Activated naive CD4-positive, alpha-beta T cell treated with anti-CD3 and anti-CD28 coated beads, Interleukin-2, amount 10 ng/mL, durations not matched to agents 7 days and 5 days (primary cell): ENCODE measurements at regions of chr22 and their contacts with region 1.

Region 1: DNA sequence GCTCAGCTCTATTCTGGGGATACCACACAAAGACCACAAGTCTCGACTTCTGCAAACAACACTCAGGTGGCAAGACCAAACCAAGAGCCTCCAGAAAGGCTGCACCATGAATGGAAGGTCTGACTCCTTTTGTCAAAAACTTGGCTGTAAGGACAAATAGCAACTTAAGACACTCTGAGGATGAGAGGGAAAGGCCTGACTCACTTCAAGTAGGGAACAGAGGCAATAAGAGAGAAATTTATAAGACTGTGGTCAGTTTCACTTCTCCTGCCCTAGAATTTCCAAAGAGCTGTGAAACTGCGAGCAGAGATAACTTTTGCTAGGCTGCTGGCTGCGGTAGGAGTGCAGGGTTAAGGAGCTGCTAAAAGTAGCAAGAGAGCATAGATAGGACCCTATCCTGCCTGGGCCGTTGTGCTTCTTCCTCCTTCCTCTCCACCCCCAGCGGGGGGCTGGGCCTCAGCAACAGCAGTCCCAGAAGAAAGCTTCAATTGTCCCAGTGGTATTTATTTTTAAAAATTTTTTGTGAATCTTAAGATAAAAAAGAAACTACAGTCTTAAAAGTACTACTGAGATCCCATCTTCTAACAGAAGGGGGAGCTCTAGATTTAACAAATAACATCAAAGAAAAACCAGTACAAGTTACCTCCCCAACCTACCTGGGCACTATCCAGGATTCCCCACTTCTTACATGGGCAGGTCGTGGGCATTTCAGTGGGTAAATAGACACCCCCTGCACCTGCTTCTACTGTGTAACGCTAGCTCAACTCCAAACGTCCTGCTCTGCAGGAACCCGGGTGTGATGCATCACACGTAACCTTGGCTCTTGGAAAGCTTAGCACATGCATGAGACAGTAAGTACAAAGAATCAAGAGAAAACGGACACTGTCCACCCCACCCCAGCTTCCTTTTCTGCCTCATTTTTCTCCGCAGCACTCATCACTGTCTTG is 66.4 kb downstream of the SGSM3 start:
- DNase-seq: no peak
- H3K4me3 Mint-ChIP-seq: no peak overlapping the region
- H3K27ac Mint-ChIP-seq: peak overlapping the region; percentile 73
- H3K4me1 Mint-ChIP-seq: peaks cover 39% of the 10 kb centered on the region
- H3K27me3 Mint-ChIP-seq: no peaks in the 10 kb centered on the region

Region 2: DNA sequence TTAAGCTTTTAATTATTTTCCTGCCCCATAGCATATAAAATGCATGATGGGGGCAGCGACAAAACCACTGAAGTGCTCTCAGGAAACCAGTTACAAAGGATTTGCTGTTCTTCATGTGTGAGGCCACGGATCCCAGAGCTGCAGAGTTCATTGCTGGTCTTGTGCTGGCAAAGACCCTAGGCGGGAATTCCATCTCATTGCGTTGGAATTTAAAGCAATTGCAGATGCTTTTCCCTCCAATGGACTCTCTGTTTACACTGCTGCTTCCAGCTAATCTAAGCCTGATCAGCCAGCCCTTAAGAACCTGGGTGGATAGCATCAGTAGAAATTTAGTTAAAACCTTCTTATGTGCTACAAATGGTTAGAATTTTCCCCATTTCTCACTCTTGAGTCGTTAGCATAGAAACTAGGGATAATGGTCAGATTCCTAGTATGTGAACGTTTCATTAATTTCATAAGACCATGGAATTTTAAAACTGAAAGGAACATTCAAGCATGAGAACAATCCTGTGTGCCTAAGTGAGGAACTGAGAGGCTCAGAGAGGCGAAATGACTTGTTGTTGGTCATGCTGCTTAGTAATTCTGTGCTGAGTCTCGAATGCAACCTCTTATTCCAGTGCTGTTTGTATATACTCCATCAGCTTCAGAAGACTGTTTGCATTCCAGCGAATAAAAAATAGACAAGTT is 126.6 kb before region 1 on chr22:
- CTCF ChIA-PET with region 1: no interaction called
- DNase-seq: no peak
- H3K4me3 Mint-ChIP-seq: no peak overlapping the region
- H3K27ac Mint-ChIP-seq: no peak overlapping the region
- H3K4me1 Mint-ChIP-seq: peaks cover 30% of the 10 kb centered on the region
- H3K27me3 Mint-ChIP-seq: no peaks in the 10 kb centered on the region

Region 3: DNA sequence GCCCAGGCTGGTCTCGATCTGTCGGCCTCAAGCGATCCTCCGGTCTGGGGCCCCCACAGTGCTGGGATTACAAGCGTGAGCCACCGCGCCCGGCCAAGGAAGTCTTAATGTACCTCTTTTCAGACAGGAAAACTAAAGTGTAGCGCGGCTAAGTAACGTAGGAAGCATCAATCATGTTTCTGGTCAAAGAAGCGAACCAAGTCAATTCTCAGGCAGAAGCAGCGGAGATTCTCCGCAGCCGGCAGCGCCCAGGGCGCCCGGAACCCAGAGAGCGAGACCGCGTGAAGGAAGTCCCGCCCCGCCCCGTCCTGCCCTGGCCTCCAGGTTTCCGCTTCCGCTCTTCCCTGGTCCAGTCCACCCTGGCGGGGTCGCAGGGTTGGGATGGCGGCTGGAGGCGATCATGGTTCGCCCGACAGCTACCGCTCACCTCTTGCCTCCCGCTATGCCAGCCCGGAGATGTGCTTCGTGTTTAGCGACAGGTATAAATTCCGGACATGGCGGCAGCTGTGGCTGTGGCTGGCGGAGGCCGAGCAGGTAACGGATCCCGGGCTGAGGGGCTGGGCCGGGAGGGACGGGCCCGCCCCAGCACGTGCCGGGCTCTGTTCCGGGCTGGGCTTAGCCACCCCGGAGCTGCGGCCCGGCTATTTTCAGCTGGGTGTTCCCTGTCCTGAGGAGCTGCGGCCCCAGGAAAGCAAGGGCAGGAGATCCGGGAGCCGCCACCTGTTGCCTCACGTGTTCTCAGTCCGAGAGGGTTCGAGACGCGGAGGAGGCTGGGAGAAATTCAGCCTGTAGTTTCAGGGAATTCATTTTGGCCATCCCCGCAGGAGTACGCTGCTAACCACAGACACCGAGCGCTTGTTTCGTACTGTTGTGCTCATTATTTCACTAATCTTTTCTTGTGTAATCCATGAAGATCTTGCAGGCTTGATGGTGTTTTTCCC is 90.3 kb before region 1 on chr22 and contains the start of gene ADSL:
- CTCF ChIA-PET with region 1: no interaction called
- DNase-seq: peak; percentile 91
- H3K4me3 Mint-ChIP-seq: peak within 1 kb of the TSS; percentile 98
- H3K27ac Mint-ChIP-seq: peak within 1 kb of the TSS; percentile 100
- H3K4me1 Mint-ChIP-seq: peaks cover 56% of the 10 kb centered on the region
- H3K27me3 Mint-ChIP-seq: no peaks in the 10 kb centered on the region

Region 4: GRCh38 chr22:40426594-40427333 is 10.0 kb before region 1 on chr22:
- CTCF ChIA-PET with region 1: interaction called, 24 read pairs
- DNase-seq: no peak
- H3K4me3 Mint-ChIP-seq: no peak overlapping the region
- H3K27ac Mint-ChIP-seq: peak overlapping the region; percentile 69
- H3K4me1 Mint-ChIP-seq: peaks cover 8% of the 10 kb centered on the region
- H3K27me3 Mint-ChIP-seq: no peaks in the 10 kb centered on the region

Region 5: GRCh38 chr22:40473703-40474102 is 36.9 kb after region 1 on chr22:
- CTCF ChIA-PET with region 1: interaction called, 16 read pairs
- DNase-seq: no peak
- H3K4me3 Mint-ChIP-seq: no peak overlapping the region
- H3K27ac Mint-ChIP-seq: no peak overlapping the region
- H3K4me1 Mint-ChIP-seq: peaks cover 38% of the 10 kb centered on the region
- H3K27me3 Mint-ChIP-seq: no peaks in the 10 kb centered on the region

Region 6: DNA sequence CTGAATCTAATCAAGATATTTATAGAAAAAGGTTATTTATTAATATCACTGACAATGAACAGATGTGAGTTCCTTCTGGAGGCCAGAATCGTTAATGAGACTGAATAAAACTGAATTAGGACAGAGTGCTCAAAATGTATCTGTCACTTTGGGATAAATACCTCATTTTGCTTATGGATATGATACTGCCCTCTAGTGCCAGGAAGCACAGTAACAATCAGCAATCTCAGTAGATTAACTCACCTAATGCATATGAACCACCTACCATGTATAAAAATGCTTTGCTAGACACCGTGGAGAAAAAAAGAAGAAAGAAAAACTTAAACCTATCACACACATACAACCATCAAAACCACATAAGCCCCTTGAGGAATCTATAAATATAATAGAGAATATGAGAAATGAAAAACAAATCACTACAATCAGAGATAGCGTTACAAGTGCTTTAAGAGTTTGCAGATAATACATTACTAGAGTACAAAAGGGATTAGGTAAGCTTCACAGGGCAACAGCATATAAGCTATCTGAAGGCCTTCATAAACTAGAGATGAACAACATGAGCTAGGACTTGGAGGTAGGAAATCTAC is 51.0 kb after region 1 on chr22:
- CTCF ChIA-PET with region 1: interaction called, 77 read pairs
- DNase-seq: no peak
- H3K4me3 Mint-ChIP-seq: no peak overlapping the region
- H3K27ac Mint-ChIP-seq: no peak overlapping the region
- H3K4me1 Mint-ChIP-seq: peaks cover 35% of the 10 kb centered on the region
- H3K27me3 Mint-ChIP-seq: no peaks in the 10 kb centered on the region

Region 7: DNA sequence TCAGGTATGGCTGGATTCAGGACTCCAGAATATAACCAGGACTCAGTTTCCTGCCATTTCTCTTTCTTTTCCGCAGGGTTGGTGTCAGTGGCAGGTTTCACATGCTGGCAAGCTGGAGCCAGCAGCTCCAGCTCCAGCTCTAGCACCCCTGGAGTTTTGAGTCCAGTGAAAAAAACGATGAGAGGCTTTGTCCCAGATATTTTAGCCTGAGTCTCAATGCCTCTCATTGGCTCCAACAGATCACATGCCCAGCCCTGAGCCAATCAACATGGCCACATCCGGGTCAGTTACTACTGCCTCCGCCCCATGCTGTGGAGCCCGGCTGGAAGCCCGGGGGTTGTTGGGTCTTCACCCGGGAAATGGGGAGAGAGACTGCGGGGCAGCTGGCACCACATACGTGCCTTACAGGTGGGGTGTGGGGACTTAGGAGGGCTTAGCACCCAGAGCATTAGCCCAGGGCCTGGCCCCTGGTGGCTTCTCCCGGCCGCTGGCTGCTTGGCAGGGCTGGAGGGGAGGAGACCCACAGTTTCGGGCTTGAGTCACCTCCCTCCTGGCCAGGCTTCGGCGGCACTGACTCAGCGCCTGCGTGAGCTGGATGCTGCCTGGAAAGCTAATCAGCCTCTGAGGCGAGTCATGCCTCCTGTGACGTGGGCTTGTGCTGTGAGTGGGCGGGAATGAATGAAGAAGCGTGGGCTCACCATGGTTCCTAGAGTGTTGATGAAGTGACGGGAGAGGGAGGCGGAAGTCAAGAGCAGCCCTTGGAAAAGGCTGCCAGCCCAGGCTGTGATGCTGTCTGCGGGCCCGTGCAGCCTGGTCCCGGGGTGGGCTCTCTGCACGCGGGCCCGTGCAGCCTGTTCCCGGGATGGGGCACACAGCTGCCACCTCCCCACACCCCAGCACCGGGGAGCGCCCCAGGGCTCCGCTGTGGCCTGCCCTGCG is 215.1 kb after region 1 on chr22:
- CTCF ChIA-PET with region 1: interaction called, 95 read pairs
- DNase-seq: peak; percentile 65
- H3K4me3 Mint-ChIP-seq: peak overlapping the region; percentile 62
- H3K27ac Mint-ChIP-seq: peak overlapping the region; percentile 47
- H3K4me1 Mint-ChIP-seq: peaks cover 17% of the 10 kb centered on the region
- H3K27me3 Mint-ChIP-seq: peaks cover 6% of the 10 kb centered on the region